PC-3 (cell line): ENCODE measurements at regions of chr1 and their contacts with region 1.

Region 1: DNA sequence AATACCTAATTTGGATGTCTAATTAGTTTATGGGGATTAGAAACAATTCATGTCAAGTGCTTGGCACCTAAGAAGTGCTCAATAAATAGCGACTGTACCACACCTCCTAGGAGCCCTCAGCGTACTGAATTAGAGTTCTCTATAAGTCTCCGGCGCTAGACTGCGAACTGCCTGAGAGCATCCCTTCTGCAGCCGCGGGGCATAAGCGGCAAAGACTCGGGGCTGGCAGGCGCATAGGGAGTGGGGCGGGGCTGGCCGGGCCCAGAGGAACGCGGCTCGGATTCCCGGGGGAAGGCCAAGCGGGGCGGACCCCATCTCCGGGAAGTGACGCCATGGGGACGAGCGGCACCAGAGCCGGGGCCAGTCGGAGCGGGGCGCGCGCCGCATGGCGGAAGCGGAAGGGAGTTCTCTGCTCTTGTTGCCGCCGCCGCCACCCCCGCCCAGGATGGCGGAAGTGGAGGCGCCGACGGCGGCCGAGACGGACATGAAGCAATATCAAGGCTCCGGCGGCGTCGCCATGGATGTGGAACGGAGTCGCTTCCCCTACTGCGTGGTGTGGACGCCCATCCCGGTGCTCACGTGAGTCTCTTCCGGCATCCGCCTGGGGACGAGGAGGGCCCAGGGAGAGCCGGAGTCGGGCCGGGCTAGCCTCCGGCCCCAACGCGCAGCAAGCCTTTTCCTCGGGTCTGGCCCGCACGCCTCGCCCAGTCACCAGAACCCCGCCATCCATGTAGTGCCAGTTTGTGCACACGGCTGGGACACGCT is at the start of gene TMEM222:
- DNase-seq: peak; percentile 96
- ATAC-seq: peak; percentile 95
- H3K4me3 ChIP-seq: peak within 1 kb of the TSS; percentile 99
- H3K27ac ChIP-seq: peak within 1 kb of the TSS; percentile 71
- H3K4me1 ChIP-seq: peaks cover 12% of the 10 kb centered on the region; the same call in 1 of the 2 replicates
- H3K27me3 ChIP-seq: no peaks in the 10 kb centered on the region
- CTCF ChIP-seq: no peak
- total RNA-seq, gene TMEM222: 50.3 and 57.4 TPM in 2 replicates

Region 2: GRCh38 chr1:27341525-27342252 is 19.7 kb after region 1 on chr1 and contains the start of gene SYTL1:
- CTCF ChIA-PET with region 1: no interaction called
- POLR2A ChIA-PET with region 1: no interaction called
- intact Hi-C with region 1: loop called (anchors 2 kb)
- DNase-seq: peak; percentile 86
- ATAC-seq: peak; percentile 72
- H3K4me3 ChIP-seq: peak within 1 kb of the TSS; percentile 79
- H3K27ac ChIP-seq: peak within 1 kb of the TSS; percentile 88
- H3K4me1 ChIP-seq: peaks cover 37% of the 10 kb centered on the region
- H3K27me3 ChIP-seq: no peaks in the 10 kb centered on the region
- CTCF ChIP-seq: no peak
- total RNA-seq, gene SYTL1: 26.8 and 34.3 TPM in 2 replicates